Right cardiac atrium (tissue), 5 donors: ENCODE measurements at regions of chr11 and their contacts with region 1.

Region 1: DNA sequence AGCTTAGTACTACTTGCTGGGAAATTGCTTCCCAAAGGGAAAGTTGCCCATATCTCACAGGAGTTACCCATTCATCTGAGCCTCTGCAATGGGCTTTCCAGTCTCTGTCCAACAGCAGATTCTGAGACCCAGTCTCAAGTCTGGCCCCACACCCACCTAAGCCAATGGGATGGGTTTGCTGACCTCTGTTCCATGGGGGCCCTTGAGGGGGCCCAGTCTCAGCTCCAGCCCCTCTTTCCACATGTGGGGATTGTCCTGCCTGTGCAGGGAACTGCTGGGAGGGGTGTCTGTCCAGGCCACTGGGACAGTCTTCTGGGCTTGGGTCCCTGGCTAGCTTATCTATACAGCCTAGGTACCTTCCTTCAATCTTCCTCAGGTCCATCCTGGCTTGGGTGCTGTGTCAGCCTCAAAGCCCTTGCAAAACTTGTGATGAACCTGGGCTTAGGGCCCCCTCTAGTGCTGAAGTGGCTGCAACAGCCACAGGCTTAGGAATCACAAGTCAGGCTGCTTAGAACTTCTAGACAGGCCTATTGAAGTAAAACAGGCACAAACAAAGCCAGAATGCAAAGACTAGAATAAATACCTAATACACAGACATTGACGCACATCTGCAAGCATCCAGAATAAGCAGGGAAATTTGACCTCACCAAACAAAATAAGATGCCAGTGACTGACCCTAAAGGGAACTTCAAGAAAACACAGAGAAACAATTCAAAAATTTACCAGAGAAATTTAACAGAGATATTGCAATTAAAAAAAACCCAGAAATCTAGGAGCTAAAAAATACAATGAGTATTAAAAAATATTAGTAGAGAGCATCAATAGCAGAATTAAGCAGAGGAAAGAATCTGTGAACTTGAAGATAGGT is 11.7 kb upstream of the PATL1 start:
- DNase-seq: peak; percentile 46 to 77 (median 65)
- ATAC-seq: peak; percentile 83 to 87
- H3K4me3 ChIP-seq: no peak overlapping the region
- H3K27ac ChIP-seq: no peak overlapping the region
- H3K4me1 ChIP-seq: no peaks in the 10 kb centered on the region
- H3K27me3 ChIP-seq: no peaks in the 10 kb centered on the region

Region 2: DNA sequence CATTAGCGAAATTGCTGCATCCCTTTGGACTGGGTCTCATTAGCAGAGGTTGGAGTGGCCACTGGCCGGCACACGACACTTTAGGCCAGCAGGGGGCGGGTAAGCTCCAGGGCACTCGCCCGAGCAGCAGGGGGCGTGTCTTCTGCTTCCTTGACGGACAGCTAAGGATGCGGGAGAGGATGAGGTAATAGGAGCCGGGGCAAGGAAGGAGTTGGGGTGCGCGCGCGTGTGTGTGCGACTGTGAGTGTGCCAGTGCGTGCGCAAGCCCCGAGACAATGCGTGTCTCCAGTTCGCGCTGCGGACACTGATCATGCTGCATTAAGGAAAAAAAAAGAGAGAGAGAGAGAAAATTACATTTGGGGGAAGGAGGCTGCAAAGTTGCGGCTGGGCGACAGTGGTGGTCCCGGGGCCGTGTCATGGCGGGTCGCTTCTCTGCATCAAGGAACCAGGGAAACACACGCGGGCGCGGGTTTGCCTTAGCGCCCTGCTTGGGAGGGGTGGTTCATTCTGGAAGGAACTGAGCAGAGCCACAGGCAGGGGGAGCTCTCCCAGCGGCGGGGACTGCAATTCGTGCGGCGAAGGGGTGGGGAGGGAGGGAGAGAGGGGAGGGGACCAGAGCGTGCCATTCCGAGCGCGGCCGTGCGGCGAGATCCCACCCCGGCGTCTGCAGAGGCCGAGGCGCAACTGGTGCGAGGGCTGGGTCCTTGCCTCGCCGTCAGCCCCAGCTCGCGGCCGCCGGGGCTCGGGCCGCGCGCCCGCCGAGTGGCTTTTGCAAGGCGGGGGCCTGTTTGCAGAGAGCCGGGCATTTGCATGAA is 508.8 kb before region 1 on chr11 and contains the start of gene DTX4:
- intact Hi-C with region 1: loop called in 1 of 4 experiments (anchors 5 kb)
- DNase-seq: peak; percentile 92 to 98 (median 97)
- ATAC-seq: peak; percentile 96 to 97
- H3K4me3 ChIP-seq: peak within 1 kb of the TSS; percentile 73
- H3K27ac ChIP-seq: peak within 1 kb of the TSS; percentile 2
- H3K4me1 ChIP-seq: no peaks in the 10 kb centered on the region
- H3K27me3 ChIP-seq: no peaks in the 10 kb centered on the region
- total RNA-seq, gene DTX4: 1.6 to 3.4 (median 1.7) TPM

Region 3: DNA sequence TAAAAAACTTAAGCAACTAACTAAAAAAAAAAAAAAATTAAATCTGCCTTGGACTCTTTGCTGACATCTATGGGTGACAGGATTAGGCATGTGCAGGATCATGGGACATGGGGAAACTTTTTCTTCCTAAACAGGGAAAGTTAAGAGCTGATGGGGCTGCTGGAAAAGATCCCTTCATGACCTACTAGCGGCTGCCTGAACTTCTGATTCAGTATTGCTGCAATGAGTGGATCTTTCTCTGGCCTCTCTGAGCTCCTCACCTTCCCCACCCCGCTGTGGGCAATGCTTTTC is 279.3 kb before region 1 on chr11:
- intact Hi-C with region 1: no loop called
- DNase-seq: no peak
- ATAC-seq: no peak
- H3K4me3 ChIP-seq: no peak overlapping the region
- H3K27ac ChIP-seq: no peak overlapping the region
- H3K4me1 ChIP-seq: no peaks in the 10 kb centered on the region
- H3K27me3 ChIP-seq: no peaks in the 10 kb centered on the region

Region 4: DNA sequence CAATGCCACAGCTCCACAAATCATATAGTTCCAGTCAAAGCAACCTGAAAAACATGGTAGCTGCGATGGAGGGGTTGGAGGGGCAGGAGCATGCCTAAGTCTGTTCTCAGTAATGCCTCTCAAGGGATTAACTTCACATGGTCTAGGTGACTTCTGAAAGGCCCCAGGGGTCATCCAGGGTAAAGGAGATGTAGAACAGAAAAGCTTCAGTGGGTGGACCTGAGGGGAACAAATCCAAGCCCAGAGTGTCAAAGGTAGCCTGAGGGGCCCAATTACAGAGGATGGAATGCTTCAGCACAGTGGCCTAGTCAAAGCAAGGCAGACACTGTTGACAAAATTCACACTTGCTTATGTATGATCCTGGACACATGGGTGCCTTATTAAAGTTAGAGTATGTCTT is 145.8 kb before region 1 on chr11:
- intact Hi-C with region 1: loop called in 3 of 4 experiments (anchors 5 kb)
- DNase-seq: no peak
- ATAC-seq: no peak
- H3K4me3 ChIP-seq: no peak overlapping the region
- H3K27ac ChIP-seq: no peak overlapping the region
- H3K4me1 ChIP-seq: no peaks in the 10 kb centered on the region
- H3K27me3 ChIP-seq: no peaks in the 10 kb centered on the region

Region 5: GRCh38 chr11:59716051-59716450 is 35.5 kb after region 1 on chr11:
- intact Hi-C with region 1: no loop called
- DNase-seq: no peak
- ATAC-seq: no peak
- H3K4me3 ChIP-seq: no peak overlapping the region
- H3K27ac ChIP-seq: no peak overlapping the region
- H3K4me1 ChIP-seq: no peaks in the 10 kb centered on the region
- H3K27me3 ChIP-seq: no peaks in the 10 kb centered on the region

Region 6: DNA sequence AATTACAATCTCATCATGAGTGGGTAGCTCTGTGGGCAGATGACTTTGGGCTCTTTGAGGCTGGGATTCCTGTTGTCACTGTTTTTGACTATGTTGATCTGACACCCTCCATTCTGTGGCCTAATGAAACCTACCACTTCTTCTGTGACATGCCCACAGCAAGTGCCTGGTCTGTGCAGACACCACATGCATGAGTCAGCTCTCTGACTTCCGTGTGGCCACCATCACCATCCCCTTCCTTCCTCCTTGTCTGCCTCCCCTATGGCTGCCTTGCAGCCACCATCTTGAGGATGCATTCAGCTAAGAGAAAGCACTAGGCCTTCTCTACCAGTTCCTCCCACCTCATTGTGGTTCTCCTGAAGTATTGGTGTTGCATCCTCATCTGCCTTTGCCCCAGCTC is 48.4 kb after region 1 on chr11:
- intact Hi-C with region 1: no loop called
- DNase-seq: no peak
- ATAC-seq: peak in 1 of 2 donors; percentile 11
- H3K4me3 ChIP-seq: no peak overlapping the region
- H3K27ac ChIP-seq: no peak overlapping the region
- H3K4me1 ChIP-seq: no peaks in the 10 kb centered on the region
- H3K27me3 ChIP-seq: no peaks in the 10 kb centered on the region